Sciatic nerve (tissue), 2 donors: ENCODE measurements at regions of chr6 and their contacts with region 1.

Region 1: GRCh38 chr6:80940571-80940970 is 811.9 kb downstream of the TENT5A start:
- DNase-seq: no peak
- ATAC-seq: peak; percentile 57

Region 2: GRCh38 chr6:80077067-80077466 is 863.5 kb before region 1 on chr6:
- intact Hi-C with region 1: loop called (anchors 5 kb)
- DNase-seq: no peak
- ATAC-seq: no peak